ENCODE measurements at regions of chr5 and their contacts with region 1.

Region 1: GRCh38 chr5:141564216-141564692 is 54.5 kb downstream of the DIAPH1 start:
- DNase-seq: peak; percentile 43
- ATAC-seq: peak; percentile 56 to 70

Region 2: DNA sequence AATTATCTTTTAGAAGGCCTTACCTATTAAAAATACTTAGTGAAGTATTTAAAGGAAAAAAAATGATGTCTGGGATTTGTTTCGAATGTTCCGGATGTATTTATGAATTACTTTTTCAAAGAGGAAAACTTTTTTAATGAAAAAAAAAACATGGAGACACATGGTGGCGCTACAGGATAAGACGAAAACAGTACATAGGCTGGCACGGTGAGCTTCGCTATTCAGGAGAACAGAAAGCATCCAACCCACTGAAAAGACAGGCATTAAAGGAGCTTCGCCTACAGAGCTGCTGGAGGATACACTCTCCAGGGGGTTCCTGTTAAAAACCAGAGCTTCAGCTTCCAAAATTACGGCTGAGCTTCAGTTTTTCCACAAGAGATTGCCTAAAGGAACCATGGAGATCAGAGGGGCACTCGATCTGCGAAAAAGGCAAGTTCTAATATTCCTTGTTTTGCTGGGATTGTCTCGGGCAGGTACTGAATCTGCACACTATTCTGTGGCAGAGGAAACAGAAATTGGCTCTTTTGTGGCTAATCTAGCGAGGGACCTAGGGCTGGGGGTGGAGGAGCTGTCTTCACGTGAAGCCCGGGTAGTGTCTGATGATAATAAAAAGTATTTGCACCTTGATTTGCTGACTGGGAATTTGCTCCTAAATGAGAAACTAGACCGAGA is 341.0 kb before region 1 on chr5 and contains the start of gene PCDHB14:
- intact Hi-C with region 1: loop called in 1 of 2 experiments (anchors 5 kb)
- DNase-seq: no peak
- ATAC-seq: peak in 1 of 2 donors; percentile 61
- total RNA-seq, gene PCDHB14: 3.9 to 5.8 TPM

Region 3: GRCh38 chr5:141320225-141321169 is 243.8 kb before region 1 on chr5 and contains the start of gene TAF7:
- intact Hi-C with region 1: loop called in 1 of 2 experiments (anchors 5 kb)
- DNase-seq: peak; percentile 92
- ATAC-seq: peak; percentile 100
- total RNA-seq, gene TAF7: 86.3 to 93.5 TPM

Region 4: GRCh38 chr5:141330299-141331080 is 233.8 kb before region 1 on chr5 and contains the start of gene PCDHGA1:
- intact Hi-C with region 1: loop called (anchors 5 to 10 kb)
- DNase-seq: no peak
- ATAC-seq: peak in 1 of 2 donors; percentile 66
- total RNA-seq, gene PCDHGA1: 1.4 to 1.8 TPM

Region 5: GRCh38 chr5:141338538-141339306 is 225.5 kb before region 1 on chr5 and contains the start of gene PCDHGA2:
- intact Hi-C with region 1: loop called (anchors 5 to 10 kb)
- DNase-seq: peak; percentile 31
- ATAC-seq: peak; percentile 74 to 78
- total RNA-seq, gene PCDHGA2: 4.5 to 7.3 TPM

Region 6: DNA sequence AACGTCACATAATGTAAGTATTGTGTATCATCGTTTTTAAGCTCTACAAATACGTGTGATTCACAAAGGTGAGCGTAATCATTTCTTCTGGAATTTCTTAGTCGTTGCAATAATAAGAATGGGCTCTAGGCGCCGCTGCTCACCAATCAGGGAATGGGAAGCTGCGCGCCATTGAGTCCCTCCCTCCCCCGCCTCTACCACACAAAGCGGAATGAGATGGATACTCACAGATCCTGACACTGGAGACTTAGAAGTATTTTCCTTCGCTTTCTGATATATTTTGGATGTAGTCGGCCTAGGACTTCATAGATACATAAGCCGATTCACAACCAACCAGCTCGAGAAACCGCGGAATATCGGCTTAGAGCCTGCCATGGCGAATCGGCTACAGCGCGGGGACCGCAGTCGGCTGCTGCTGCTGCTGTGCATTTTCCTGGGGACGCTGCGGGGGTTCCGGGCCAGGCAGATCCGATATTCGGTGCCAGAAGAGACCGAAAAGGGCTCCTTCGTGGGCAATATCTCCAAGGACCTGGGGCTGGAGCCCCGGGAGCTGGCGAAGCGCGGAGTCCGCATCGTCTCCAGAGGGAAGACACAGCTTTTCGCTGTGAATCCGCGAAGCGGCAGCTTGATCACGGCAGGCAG is 143.3 kb before region 1 on chr5 and contains the start of gene PCDHGA11:
- intact Hi-C with region 1: loop called (anchors 5 to 10 kb)
- DNase-seq: no peak
- ATAC-seq: peak in 1 of 2 donors; percentile 52
- total RNA-seq, gene PCDHGA11: 3.2 to 3.5 TPM

Region 7: GRCh38 chr5:141524604-141525597 is 39.4 kb before region 1 on chr5:
- intact Hi-C with region 1: loop called in 1 of 2 experiments (anchors 5 kb)
- DNase-seq: peak; percentile 85
- ATAC-seq: peak; percentile 61 to 85

Measured in left cardiac atrium (tissue), 4 donors.